ENCODE measurements at regions of chr20 and their contacts with region 1.

Region 1: GRCh38 chr20:49676581-49677291 is 36.9 kb downstream of the B4GALT5 start:
- DNase-seq: no peak
- ATAC-seq: peak; percentile 52
- H3K4me3 ChIP-seq: no peak overlapping the region
- H3K27ac ChIP-seq: peak overlapping the region; percentile 91
- H3K4me1 ChIP-seq: peaks cover 70% of the 10 kb centered on the region
- H3K27me3 ChIP-seq: no peaks in the 10 kb centered on the region
- CTCF ChIP-seq: no peak

Region 2: GRCh38 chr20:49832632-49833327 is 156.0 kb after region 1 on chr20:
- CTCF ChIA-PET with region 1: no interaction called
- POLR2A ChIA-PET with region 1: interaction called, 10 read pairs
- in situ Hi-C with region 1: no loop called
- intact Hi-C with region 1: no loop called
- DNase-seq: no peak
- ATAC-seq: no peak
- H3K4me3 ChIP-seq: no peak overlapping the region
- H3K27ac ChIP-seq: no peak overlapping the region
- H3K4me1 ChIP-seq: no peaks in the 10 kb centered on the region
- H3K27me3 ChIP-seq: no peaks in the 10 kb centered on the region
- CTCF ChIP-seq: no peak